ENCODE measurements at regions of chr16 and their contacts with region 1.

Region 1: DNA sequence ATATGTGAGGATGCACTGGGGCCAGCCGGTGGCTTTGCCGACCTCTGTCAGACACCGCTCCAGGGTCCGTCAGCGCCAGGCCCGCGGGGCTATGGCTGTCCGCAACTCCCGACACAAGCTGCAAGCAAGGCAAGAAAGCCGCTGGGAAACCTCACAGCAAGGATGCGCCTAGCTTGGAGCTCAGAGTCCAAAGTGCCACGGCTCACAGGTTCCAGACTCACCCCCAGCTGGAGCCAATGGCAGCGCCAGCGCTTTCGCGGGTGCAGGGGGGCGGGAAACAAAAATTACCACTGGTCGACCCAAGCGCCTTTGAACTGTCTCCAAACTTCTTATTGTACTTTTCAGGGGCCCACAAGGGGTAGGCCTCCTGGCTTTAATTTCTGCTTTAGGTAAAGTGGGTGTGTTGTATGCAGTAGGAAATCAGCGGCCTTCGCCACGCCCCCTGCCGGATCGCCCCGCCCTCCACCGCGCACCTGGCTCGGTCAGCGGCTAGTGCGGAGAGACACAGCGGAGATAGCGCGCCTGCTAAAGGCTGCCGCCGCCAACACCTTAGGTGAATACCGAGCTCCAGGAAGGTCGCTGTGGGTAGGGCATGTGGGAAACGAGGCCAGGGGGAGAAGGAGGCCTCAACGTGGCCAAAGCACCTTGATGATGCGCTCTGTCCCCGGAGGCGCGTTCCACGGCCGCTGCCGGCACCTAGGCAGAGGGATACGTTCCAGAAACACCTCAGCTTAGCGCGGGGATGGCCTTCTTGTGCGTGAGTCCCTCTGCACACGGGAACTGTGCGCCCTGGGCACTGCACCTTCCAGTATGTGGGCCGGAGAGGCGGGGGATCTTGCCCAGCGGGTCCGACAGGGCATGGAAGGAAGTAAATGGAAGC is 61.0 kb upstream of the RBL2 start:
- DNase-seq: no peak
- H3K4me3 ChIP-seq: peak overlapping the region; percentile 42 to 77 (median 45)
- H3K4me3 Mint-ChIP-seq: peak overlapping the region; percentile 81 to 93
- H3K27ac ChIP-seq: no peak overlapping the region
- H3K27ac Mint-ChIP-seq: peak overlapping the region in 2 of 7 donors; percentile 22 to 66
- H3K4me1 ChIP-seq: peaks cover 51 to 65% of the 10 kb centered on the region in 2 donors
- H3K4me1 Mint-ChIP-seq: peaks cover 39% of the 10 kb centered on the region
- H3K27me3 ChIP-seq: peaks cover 0 to 23% of the 10 kb centered on the region in 2 donors
- H3K27me3 Mint-ChIP-seq: peaks cover 15 to 20% (median 16%) of the 10 kb centered on the region in 3 donors
- CTCF ChIP-seq: no peak

Region 2: DNA sequence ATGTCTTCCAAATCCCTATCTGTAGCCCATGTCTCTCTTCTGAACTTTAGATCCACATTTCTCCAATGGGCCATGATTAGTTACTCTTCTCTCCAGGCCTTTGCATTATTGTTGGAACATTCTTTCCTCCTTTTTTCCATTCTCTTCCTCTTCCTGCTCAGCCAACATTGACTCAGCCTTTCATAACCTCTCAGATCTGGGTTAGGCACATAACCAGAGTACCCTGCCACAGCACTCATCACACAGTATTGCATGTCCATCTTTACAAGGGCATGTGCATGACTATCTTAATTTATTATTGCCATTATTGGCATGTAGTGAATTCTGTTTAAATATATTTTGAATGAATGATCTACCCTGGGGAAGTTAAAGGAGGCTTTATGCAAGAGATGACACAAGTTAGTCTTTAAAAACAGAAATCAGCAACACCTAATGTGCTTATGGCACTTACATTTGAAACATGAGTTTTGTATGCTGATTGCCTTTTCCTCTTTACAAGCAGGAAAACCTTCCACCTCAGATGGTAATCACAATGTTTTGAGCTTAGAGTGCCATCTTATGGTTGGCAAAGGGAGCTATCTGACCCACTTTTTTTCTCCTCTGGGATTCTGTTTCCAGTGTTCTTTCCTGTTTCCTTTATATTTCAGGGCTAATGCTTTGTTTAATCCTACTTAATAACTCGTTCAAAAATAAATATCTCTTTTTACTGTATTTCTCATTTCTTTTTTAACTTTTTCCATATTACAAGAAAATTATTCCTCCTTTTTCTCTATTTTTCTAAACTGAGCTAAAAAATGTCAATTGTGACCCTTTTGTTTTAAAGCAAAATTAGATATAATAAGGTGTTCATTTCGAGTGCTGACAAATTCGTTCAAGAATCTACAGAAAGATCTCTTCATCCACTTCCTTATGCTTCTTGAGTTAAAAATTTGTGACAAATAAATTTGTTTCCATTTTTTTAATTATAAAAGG is 90.0 kb before region 1 on chr16:
- intact Hi-C with region 1: no loop called
- DNase-seq: peak in 1 of 3 donors; percentile 0
- H3K4me3 ChIP-seq: no peak overlapping the region
- H3K4me3 Mint-ChIP-seq: no peak overlapping the region
- H3K27ac ChIP-seq: no peak overlapping the region
- H3K27ac Mint-ChIP-seq: no peak overlapping the region
- H3K4me1 ChIP-seq: no peaks in the 10 kb centered on the region
- H3K4me1 Mint-ChIP-seq: no peaks in the 10 kb centered on the region
- H3K27me3 ChIP-seq: no peaks in the 10 kb centered on the region
- H3K27me3 Mint-ChIP-seq: no peaks in the 10 kb centered on the region
- CTCF ChIP-seq: peak; percentile 34

Region 3: DNA sequence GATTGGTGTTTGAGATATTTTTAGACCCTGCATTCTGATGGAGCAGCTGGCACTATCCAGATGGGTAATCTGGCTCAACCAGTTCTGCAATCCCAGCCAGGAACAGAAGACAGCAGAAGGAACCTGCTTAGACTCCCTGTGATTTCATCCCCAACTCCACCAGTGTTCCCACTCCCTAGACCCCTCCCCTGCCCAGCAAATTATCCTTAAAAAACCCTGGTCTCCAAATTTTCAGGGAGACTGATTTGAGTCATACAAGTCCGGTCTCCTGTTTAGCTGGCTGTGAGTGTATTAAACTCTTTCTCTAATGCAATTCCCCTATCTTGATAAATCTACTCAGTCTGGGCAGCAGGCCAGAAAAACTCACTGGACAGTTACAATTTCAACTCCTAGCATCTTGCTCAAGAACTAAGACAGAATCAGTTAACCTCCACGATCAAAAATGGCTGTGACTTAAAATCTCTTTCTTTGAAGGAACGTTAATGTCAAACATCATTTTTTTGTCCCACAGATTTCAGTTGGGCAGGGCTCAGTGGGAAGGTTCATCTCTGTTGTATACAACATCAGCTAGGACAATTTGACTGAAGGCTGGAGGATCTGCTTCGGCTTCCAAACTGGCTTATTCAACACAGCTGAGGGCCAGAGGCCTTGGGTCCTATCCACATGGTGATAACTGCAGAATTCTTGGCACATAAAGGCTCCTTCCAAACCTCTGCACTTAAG is 56.1 kb after region 1 on chr16:
- intact Hi-C with region 1: loop called in 1 of 2 experiments (anchors 5 kb)
- DNase-seq: no peak
- H3K4me3 ChIP-seq: no peak overlapping the region
- H3K4me3 Mint-ChIP-seq: no peak overlapping the region
- H3K27ac ChIP-seq: no peak overlapping the region
- H3K27ac Mint-ChIP-seq: peak overlapping the region in 1 of 7 donors; percentile 16
- H3K4me1 ChIP-seq: peaks cover 5 to 6% of the 10 kb centered on the region in 2 donors
- H3K4me1 Mint-ChIP-seq: peaks cover 9% of the 10 kb centered on the region
- H3K27me3 ChIP-seq: no peaks in the 10 kb centered on the region
- H3K27me3 Mint-ChIP-seq: peaks cover 2 to 11% (median 7%) of the 10 kb centered on the region in 3 donors
- CTCF ChIP-seq: no peak